ENCODE measurements at regions of chr1 and their contacts with region 1.

Region 1: GRCh38 chr1:84442256-84442655 is 36.8 kb upstream of the RPF1 start:
- DNase-seq: no peak
- H3K4me3 Mint-ChIP-seq: no peak overlapping the region
- H3K27ac Mint-ChIP-seq: no peak overlapping the region
- H3K4me1 Mint-ChIP-seq: peaks cover 7% of the 10 kb centered on the region
- H3K27me3 Mint-ChIP-seq: peaks cover 12% of the 10 kb centered on the region

Region 2: DNA sequence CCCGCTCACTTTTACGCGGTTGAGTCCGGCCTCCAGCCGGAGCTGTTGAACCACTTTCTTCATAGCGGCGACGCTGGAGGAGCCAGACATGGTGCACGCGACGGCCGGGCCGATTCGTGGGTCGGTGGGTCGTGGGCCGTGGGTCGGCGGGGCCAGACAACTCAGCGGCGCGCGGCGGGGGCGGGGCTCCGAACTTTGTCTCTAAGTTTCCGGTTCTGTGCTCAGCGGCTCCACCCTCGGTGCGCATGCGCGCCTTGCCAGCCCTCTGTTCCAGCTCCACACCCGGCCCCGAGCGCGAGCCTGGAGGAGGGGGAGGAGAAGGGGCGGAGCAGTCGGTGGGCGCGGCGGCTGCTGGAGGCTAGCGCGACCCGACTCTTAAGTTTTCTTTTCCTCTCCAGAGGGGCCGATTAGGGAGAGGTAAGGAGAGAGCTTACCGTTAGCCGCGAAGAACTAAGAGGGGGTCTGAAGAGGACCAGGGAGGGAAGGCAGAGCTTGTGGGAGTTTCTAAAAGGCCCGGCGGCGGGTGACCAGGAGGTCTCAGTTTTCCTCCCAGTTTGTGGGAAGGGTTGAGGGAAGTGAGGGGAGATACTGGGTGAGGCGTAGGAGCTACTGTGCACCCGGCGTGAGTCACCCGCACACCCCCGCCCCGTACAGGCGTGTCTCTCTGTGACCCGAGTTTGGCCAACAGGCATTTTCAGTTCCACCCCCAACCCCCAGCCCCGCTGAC is 63.9 kb after region 1 on chr1 and contains the starts of genes GNG5 and SPATA1:
- intact Hi-C with region 1: loop called (anchors 2 kb)
- DNase-seq: peak; percentile 97
- H3K4me3 Mint-ChIP-seq: peak within 1 kb of the TSS; percentile 100
- H3K27ac Mint-ChIP-seq: peak within 1 kb of the TSS; percentile 99
- H3K4me1 Mint-ChIP-seq: peaks cover 26% of the 10 kb centered on the region
- H3K27me3 Mint-ChIP-seq: no peaks in the 10 kb centered on the region
- total RNA-seq, gene GNG5: 118 and 126 TPM in 2 replicates
- total RNA-seq, gene SPATA1: 1.4 and 1.5 TPM in 2 replicates

Region 3: DNA sequence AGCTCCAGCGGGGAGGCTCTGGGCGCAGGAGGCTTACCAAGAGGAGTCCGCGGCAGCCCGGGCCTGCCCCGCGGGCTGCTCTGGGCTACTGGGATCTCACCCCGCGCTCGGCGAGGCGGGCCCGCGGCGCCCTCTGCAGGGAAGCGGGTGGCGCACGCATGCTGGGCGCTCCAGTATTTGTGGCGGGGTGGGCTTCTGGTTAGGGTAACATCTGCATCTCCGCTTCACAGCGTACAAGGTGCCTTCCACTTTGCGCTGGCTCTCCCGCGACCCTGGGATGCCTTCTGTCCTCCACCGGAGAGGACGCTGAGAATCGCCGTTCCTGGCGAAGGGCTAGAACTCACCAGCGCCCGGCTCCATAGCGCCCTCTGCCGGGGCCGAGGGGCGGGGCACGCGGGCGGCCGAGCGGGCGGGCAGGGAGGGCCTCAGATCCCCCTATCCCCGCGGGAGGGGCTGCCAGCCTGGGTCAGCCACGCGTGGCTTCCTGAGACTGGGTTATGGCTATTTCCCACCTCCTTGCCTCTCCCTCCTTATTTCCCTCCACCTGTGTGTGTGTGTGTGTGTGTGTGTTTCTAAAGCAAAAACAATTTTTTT is 178.6 kb after region 1 on chr1:
- intact Hi-C with region 1: loop called (anchors 1 kb)
- DNase-seq: peak; percentile 77
- H3K4me3 Mint-ChIP-seq: peak overlapping the region; percentile 89
- H3K27ac Mint-ChIP-seq: peak overlapping the region; percentile 88
- H3K4me1 Mint-ChIP-seq: peaks cover 23% of the 10 kb centered on the region
- H3K27me3 Mint-ChIP-seq: peaks cover under 1% of the 10 kb centered on the region

Region 4: DNA sequence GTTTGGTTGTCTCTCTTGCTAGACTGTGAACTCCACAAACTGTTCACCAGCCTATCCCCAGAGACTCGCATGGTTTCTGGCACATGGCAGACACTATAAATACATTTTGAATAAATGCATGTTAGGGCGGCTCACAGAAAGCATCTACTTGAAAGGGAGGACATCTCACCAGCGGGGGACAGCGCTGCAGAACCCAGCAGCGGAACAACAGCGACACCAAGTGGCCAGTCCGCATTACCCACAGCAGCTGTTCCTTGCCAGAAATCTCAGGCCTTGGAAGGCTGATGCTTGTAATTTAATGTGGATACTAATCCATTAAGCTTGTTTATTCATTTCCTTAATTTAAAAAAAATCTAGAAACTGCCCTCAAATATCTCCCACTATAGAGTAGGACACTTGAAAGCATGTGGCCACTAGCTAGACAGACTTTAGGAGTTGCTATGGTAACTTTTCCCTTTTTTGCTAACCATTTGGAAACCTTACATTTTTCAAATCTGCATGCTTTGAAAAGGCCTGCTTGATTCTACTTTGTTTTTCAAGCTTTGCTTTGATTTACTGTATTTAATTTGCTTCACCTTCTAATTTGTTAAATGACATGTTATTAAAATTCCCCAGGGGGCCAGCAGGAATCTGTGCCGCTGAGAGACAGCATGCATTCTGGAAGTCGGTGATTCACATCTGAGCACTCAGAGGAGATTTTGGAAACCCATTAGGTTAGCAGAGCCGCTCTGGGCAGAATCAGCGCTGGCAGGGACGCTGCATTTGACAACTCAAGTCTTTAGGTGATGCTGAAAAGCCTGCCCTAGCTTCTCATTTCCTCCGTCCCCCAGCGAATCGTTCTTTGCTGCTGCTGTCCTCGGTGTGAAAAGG is 311.5 kb after region 1 on chr1:
- intact Hi-C with region 1: loop called (anchors 1 kb)
- DNase-seq: peak; percentile 64
- H3K4me3 Mint-ChIP-seq: no peak overlapping the region
- H3K27ac Mint-ChIP-seq: no peak overlapping the region
- H3K4me1 Mint-ChIP-seq: peaks cover 7% of the 10 kb centered on the region
- H3K27me3 Mint-ChIP-seq: peaks cover 8% of the 10 kb centered on the region

Measured in activated T-helper 2 cell treated with anti-CD3 and anti-CD28 coated beads, Interferon-gamma antibody, Interleukin-2, Interleukin-4, amounts not matched to agents 10 μg/mL and 5 μg/mL and 100 μg/mL, durations not matched to agents 14 hours and 24 hours and 36 hours (primary cell).